ENCODE measurements at regions of chr11 and their contacts with region 1.

Region 1: GRCh38 chr11:30128269-30128932 is 102.4 kb upstream of the FSHB start:
- DNase-seq: no peak
- H3K4me3 Mint-ChIP-seq: no peak overlapping the region
- H3K27ac Mint-ChIP-seq: no peak overlapping the region
- H3K4me1 Mint-ChIP-seq: no peaks in the 10 kb centered on the region
- H3K27me3 Mint-ChIP-seq: peaks cover 2% of the 10 kb centered on the region

Region 2: GRCh38 chr11:30049214-30049613 is 79.2 kb before region 1 on chr11:
- CTCF ChIA-PET with region 1: no interaction called
- intact Hi-C with region 1: no loop called
- DNase-seq: no peak
- H3K4me3 Mint-ChIP-seq: no peak overlapping the region
- H3K27ac Mint-ChIP-seq: no peak overlapping the region
- H3K4me1 Mint-ChIP-seq: no peaks in the 10 kb centered on the region
- H3K27me3 Mint-ChIP-seq: no peaks in the 10 kb centered on the region

Region 3: GRCh38 chr11:30143098-30143705 is 14.8 kb after region 1 on chr11:
- CTCF ChIA-PET with region 1: interaction called, 21 read pairs
- intact Hi-C with region 1: no loop called
- DNase-seq: no peak
- H3K4me3 Mint-ChIP-seq: no peak overlapping the region
- H3K27ac Mint-ChIP-seq: no peak overlapping the region
- H3K4me1 Mint-ChIP-seq: no peaks in the 10 kb centered on the region
- H3K27me3 Mint-ChIP-seq: peaks cover 9% of the 10 kb centered on the region

Region 4: GRCh38 chr11:30196400-30197206 is 68.2 kb after region 1 on chr11:
- CTCF ChIA-PET with region 1: no interaction called
- intact Hi-C with region 1: no loop called
- DNase-seq: peak; percentile 57
- H3K4me3 Mint-ChIP-seq: no peak overlapping the region
- H3K27ac Mint-ChIP-seq: no peak overlapping the region
- H3K4me1 Mint-ChIP-seq: no peaks in the 10 kb centered on the region
- H3K27me3 Mint-ChIP-seq: peaks cover 4% of the 10 kb centered on the region

Measured in activated naive CD4-positive, alpha-beta T cell treated with anti-CD3 and anti-CD28 coated beads for 36 hours (primary cell).